ENCODE measurements at regions of chr11 and their contacts with region 1.

Region 1: DNA sequence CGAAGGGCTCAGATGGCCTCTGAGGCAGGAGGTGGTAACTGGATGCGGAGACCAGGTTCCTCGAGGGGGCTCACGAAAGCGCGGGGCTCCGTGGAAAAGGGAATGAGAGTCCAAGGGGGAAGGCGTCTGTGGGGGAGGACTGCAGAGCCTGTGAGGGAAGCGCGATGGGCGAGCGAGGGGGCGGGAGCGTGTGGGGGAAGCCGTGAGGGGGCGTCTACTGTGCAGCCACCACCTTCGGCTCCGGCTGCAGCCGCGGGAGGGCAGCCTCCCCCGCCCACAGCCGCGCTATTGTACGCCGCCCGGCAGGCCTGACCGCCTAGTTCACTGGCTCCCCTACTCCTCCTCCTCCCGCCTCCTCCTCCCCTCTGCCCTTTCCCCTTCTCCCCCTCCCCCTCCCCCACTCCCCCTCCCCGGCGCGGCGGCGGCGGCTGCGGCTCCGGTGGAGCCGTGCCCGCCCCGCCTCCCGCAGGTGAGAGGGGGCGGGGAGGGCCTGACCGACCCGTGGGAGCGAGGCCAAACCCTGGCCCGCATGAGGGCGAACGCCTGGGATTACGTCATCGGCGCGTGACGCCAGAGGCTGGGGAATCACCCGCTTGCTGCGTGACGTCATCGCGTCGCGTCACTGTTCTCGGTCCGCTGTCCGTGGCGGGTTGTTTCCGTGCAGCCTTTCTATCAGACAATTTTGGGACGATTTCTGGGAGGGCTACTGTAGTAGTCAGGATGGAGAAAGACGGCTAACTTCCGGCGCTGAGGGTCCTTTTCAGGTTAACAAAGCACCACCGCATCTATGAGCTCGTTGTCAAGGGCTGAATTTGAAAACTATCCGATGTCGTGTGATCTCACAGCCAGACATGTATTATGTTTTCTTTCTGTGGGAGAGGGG is at the start of gene PAK1:
- DNase-seq: peak; percentile 97
- total RNA-seq, gene PAK1: 31.0 to 31.9 TPM

Region 2: DNA sequence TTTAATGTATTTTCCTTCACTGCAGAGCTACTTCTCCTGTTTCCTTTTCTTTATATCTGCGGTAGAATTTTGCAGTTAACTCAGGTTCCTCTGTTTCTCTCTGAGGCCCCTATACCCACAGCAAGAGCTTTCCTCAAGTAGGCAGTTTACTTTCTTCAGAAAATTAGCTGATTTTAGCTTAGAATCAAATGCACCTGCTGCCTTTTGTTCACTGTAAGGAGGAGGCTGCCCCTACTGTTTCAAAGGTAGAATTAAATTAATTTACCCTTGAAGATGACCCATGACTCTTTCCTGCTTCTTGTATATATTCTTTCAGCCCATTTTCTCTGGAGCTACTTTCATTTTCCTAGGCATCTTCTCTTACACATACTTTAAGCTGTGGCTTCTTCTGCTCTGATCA is 103.8 kb before region 1 on chr11:
- intact Hi-C with region 1: no loop called
- DNase-seq: no peak

Region 3: GRCh38 chr11:77411717-77412441 is 62.2 kb before region 1 on chr11:
- intact Hi-C with region 1: no loop called
- DNase-seq: peak; percentile 97

Region 4: GRCh38 chr11:77457340-77457739 is 16.7 kb before region 1 on chr11:
- intact Hi-C with region 1: loop called in 1 of 2 experiments (anchors 2 kb)
- DNase-seq: no peak

Region 5: DNA sequence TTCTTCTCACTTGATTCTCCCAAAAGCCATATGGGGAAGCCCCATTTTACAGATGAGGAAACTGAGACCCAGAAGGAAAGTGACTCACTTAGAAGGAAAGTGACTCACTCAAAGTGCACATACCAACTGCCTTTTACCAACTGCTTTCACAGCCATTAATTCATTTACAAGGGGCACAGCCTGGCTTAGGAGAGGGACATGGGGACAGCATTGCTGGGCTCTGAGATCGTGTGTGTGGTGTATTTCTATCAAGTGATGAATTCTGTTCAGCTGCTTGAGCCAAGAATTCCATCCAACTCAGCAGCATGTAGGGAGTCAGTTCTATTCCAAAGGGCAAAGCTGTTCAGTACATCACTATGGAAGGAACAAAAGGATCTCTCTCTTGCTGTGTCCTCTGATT is 23.3 kb after region 1 on chr11:
- intact Hi-C with region 1: loop called in 1 of 2 experiments (anchors 2 kb)
- DNase-seq: no peak

Region 6: GRCh38 chr11:77525452-77526091 is 51.5 kb after region 1 on chr11:
- intact Hi-C with region 1: no loop called
- DNase-seq: no peak

Measured in posterior vena cava (tissue), 2 donors.